ENCODE measurements at regions of chr5 and their contacts with region 1.

Region 1: GRCh38 chr5:78367318-78367991 is 7.0 kb downstream of the SCAMP1 start:
- DNase-seq: no peak
- H3K4me3 Mint-ChIP-seq: no peak overlapping the region
- H3K27ac Mint-ChIP-seq: no peak overlapping the region
- H3K4me1 Mint-ChIP-seq: peaks cover 11% of the 10 kb centered on the region
- H3K27me3 Mint-ChIP-seq: no peaks in the 10 kb centered on the region
- CTCF ChIP-seq: no peak

Region 2: GRCh38 chr5:78447775-78448424 is 80.4 kb after region 1 on chr5:
- CTCF ChIA-PET with region 1: interaction called, 10 read pairs
- POLR2A ChIA-PET with region 1: no interaction called
- intact Hi-C with region 1: no loop called
- DNase-seq: no peak
- H3K4me3 Mint-ChIP-seq: no peak overlapping the region
- H3K27ac Mint-ChIP-seq: no peak overlapping the region
- H3K4me1 Mint-ChIP-seq: no peaks in the 10 kb centered on the region
- H3K27me3 Mint-ChIP-seq: no peaks in the 10 kb centered on the region
- CTCF ChIP-seq: no peak

Measured in MCF 10A (cell line).